ENCODE measurements at regions of chr20 and their contacts with region 1.

Region 1: DNA sequence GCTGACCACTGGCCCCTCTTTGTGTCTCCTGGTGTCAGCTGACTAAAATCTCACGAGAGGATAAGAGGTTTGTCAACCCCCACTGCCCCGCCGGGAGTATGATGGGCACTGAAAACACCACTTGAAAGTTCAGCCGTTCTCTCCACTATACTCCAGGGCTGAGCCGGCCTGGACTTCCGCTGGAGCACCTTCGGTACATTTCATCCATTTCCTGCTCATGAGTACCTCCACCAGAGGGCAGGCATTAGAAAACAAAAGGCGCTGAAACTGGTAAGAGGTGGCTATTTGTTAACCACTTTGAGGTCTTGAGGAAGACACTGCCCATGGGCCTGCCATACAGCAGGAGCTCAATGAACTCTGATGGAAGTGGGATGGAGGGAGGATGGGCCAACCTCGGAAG is 17.9 kb upstream of the ANKRD60 start:
- DNase-seq: no peak
- H3K4me3 ChIP-seq: no peak overlapping the region
- H3K27ac ChIP-seq: no peak overlapping the region
- H3K4me1 ChIP-seq: no peaks in the 10 kb centered on the region
- H3K27me3 ChIP-seq: no peaks in the 10 kb centered on the region

Region 2: DNA sequence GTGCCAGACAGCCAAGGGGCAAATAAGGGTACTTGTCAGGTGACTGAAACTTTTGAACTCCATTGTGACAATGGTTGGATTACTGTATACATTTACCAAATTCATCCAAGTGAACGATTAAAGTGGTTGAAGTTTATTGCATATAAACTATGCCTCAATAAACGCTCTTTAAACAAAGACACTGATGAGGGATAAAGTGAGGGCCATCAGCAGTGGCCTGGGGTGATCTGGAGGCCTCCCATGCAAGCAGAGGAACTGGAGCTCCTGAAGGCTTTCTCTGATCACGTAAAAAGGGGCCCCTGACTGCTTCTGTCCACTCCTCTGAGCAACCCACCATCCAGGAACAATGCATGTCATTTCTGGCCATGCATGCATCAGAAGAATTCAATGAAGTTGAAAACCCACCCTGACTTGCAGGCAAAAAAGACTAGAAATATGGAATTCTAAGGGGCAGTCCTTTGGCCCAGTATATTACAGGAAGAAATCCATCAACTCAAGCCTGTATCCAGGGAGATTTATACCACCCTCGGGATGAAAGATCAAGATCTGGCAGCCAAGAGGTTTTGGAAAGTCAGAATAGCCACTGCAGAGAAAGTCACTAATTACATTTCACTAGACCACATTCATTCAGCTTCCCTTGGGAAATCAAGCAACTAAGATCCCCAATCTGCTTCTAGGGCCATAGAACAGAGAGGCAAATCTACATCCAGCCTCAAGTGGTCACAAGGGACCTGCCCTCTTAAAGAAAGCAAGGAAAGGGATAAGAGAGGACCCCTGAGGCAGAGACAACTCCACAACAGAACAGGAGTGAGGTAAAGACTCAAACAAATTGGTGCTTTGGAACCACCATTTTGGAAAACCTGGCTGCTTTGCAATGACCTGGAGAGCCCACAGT is 31.5 kb after region 1 on chr20:
- CTCF ChIA-PET with region 1: no interaction called
- POLR2A ChIA-PET with region 1: no interaction called
- DNase-seq: no peak
- H3K4me3 ChIP-seq: no peak overlapping the region
- H3K27ac ChIP-seq: no peak overlapping the region
- H3K4me1 ChIP-seq: no peaks in the 10 kb centered on the region
- H3K27me3 ChIP-seq: no peaks in the 10 kb centered on the region

Region 3: GRCh38 chr20:58306421-58307276 is 60.3 kb after region 1 on chr20:
- CTCF ChIA-PET with region 1: interaction called, 13 read pairs
- POLR2A ChIA-PET with region 1: no interaction called
- DNase-seq: peak; percentile 96 to 99 (median 99)
- H3K4me3 ChIP-seq: peak overlapping the region in 4 of 7 experiments; percentile 37 to 66 (median 46)
- H3K27ac ChIP-seq: peak overlapping the region; percentile 61 to 83
- H3K4me1 ChIP-seq: peaks cover 24 to 45% (median 41%) of the 10 kb centered on the region in 4 experiments
- H3K27me3 ChIP-seq: no peaks in the 10 kb centered on the region

Measured in common myeloid progenitor, CD34-positive (primary cell).